Caco-2 (cell line): ENCODE measurements at regions of chr12 and their contacts with region 1.

Region 1: GRCh38 chr12:6335451-6336078 is 6.3 kb downstream of the TNFRSF1A start:
- DNase-seq: peak; percentile 64 to 66
- H3K4me3 ChIP-seq: peak overlapping the region; percentile 15; the same call in 1 of the 2 replicates
- H3K4me3 Mint-ChIP-seq: no peak overlapping the region
- H3K27ac Mint-ChIP-seq: no peak overlapping the region
- H3K4me1 ChIP-seq: peaks cover 48% of the 10 kb centered on the region
- H3K4me1 Mint-ChIP-seq: peaks cover 7% of the 10 kb centered on the region
- H3K27me3 ChIP-seq: no peaks in the 10 kb centered on the region
- H3K27me3 Mint-ChIP-seq: no peaks in the 10 kb centered on the region
- CTCF ChIP-seq: peak in 1 of 2 experiments; percentile 56

Region 2: DNA sequence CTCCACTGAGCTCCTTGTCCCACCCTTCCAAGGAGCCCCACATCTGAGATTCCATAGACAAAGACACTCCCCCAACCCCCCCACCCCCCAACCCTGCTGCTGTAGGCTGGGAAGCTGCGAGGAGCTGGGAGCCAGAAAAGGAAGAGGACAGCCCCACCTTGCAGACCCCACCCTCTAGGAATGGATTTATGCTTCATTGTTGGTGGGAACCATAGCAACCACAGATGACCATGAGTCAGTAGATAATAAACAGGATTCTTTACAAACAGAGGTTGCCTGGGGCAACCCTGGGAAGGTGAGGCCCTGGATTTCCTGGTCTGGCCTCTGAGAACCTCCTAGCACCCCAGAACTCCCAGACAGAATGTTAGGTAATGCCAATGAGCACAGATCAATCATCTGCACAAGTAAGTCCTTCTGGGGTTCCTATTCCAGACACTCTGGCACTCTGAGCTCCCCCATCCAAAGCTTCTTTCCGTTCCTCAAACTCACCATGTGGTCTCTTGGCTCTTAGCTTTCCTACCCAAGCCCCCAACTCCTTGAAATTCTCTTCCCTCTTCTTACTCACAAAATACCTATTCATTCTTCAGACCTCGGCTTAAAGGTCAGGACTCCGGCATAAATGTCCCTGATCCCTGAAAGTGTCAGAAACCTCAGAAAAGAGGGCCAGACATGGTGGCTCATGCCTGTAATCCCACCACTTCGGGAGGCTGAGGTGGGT is 40.3 kb before region 1 on chr12:
- CTCF ChIA-PET with region 1: interaction called, 12 read pairs
- POLR2A ChIA-PET with region 1: interaction called, 13 read pairs
- intact Hi-C with region 1: no loop called
- DNase-seq: peak; percentile 86 to 89
- H3K4me3 ChIP-seq: no peak overlapping the region
- H3K4me3 Mint-ChIP-seq: no peak overlapping the region
- H3K27ac Mint-ChIP-seq: peak overlapping the region; percentile 91
- H3K4me1 ChIP-seq: peaks cover 48% of the 10 kb centered on the region
- H3K4me1 Mint-ChIP-seq: peaks cover 34% of the 10 kb centered on the region
- H3K27me3 ChIP-seq: no peaks in the 10 kb centered on the region
- H3K27me3 Mint-ChIP-seq: no peaks in the 10 kb centered on the region
- CTCF ChIP-seq: no peak

Region 3: DNA sequence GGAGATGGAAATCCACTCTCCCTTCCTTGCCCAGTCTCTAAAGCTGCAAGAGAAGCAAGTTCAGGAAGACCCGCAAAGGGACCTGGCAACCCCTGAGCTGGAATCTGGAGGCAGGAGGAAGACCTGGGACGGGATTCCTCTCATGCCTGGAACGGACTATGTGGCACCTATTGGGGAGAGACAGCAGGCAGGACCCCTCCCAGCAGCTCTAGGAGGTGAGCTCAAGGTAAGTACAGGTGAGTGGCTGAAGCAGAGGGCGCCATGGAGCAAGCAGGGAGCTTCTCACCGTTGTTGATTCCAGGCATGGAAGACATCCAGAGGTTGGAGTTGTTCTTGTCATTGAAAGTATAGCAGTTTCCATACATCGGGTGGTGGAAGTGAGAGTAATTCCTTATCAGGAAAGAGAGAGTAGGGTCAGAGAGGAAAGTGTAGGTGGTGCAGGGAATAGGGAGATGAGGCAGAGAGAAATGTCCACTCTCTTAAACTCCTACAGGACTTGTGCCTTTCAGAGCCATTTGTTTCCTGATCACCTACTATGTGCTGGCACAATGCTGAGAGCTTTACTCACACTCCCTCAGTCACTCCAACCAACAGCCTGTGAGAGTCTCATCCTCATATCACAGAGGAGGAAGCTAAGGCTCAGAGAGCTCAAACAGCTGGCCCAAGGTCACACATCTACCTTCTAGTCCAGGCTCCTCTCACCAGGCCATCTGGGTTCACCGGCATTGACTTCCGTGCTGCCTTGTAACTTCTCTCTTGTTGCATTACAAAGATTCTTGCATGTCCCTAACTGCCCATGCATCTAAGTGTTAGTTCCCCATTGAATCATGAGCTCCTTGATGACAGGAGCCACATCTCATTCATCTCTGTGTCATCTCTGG is 20.2 kb after region 1 on chr12:
- CTCF ChIA-PET with region 1: interaction called, 14 read pairs
- POLR2A ChIA-PET with region 1: interaction called, 14 read pairs
- intact Hi-C with region 1: no loop called
- DNase-seq: peak; percentile 62 to 74
- H3K4me3 ChIP-seq: no peak overlapping the region
- H3K4me3 Mint-ChIP-seq: no peak overlapping the region
- H3K27ac Mint-ChIP-seq: no peak overlapping the region
- H3K4me1 ChIP-seq: peaks cover 10% of the 10 kb centered on the region
- H3K4me1 Mint-ChIP-seq: peaks cover 8% of the 10 kb centered on the region
- H3K27me3 ChIP-seq: no peaks in the 10 kb centered on the region
- H3K27me3 Mint-ChIP-seq: no peaks in the 10 kb centered on the region
- CTCF ChIP-seq: peak; percentile 24 to 48

Region 4: DNA sequence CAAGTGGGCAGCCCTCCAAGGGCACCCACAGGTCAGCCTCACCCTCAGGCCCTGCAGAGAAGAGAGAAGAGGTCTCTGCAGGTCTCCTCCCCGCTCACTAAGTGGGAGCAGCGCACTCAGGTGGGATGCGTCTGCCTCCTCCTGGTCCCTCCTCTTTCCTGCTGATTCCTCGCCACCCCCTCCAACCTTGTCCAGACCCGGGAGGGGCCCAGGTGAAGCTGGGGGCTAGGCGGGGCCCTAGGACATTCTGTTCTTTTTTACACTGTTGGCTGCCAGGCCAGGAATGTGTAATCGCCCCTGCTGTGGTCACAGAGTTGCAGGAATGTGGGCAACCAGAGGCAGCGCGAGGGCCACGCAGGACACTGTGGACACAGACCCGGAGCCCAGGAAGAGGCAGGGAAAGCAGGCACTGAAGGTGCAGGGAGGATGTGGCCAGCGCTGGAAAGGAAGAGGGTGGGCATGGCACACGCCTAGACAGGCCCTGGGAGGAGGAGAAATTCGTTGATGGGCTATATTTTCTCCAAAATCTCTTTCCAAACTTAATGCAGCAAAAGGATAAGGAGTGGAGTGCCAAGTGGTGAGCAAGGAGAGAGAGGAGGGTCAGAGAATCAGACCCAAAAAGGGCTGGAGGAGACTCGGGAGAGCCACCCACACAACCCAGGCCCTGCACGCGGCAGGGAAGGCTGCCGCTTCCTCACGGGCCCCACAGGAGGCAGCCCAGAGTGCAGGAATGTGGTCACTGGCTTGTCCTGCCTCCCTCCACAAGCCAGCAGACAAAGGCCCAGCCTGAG is 40.7 kb after region 1 on chr12:
- CTCF ChIA-PET with region 1: interaction called, 32 read pairs
- POLR2A ChIA-PET with region 1: interaction called, 27 read pairs
- intact Hi-C with region 1: loop called (anchors 1 kb)
- DNase-seq: peak; percentile 88 to 89
- H3K4me3 ChIP-seq: no peak overlapping the region
- H3K4me3 Mint-ChIP-seq: peak overlapping the region; percentile 72
- H3K27ac Mint-ChIP-seq: peak overlapping the region; percentile 94
- H3K4me1 ChIP-seq: peaks cover 68% of the 10 kb centered on the region
- H3K4me1 Mint-ChIP-seq: peaks cover 51% of the 10 kb centered on the region
- H3K27me3 ChIP-seq: no peaks in the 10 kb centered on the region
- H3K27me3 Mint-ChIP-seq: no peaks in the 10 kb centered on the region
- CTCF ChIP-seq: peak; percentile 69 to 71

Region 5: DNA sequence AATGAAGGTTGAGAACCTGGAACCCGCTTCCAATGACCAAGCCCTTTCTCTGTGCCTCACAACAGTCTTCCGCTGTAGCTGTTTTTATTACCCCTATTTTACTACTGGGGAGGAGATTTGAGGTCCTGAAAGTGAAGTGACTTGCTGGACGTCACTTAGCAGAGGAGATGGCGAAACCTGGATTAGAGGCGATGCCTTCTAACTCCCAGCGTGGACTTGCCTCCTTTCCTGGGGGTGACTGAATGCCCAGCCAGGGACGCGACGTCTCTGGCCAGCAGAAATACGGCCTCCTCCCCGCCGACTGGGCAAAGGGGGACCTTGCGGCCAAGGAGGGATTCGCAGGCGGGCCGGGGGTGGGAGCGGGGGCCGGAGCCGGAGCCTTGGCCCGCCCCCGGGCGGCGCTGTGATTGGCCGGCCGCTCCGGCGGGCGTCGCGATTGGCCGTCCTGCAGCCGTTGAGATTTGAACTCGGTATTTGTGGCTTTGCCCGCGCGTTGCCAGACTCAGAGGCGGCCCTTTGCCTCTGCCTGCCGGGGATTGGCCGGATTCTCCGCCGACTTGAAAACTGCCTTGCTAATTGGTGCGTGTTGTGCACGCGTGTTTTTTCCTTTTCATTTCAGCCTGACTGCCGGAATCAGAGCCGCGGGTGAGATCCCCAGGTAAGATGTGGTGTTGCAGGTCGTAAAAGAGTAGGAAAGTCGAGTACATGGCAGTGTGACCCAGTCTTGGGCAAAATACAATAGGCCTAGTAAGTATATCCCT is 158.1 kb after region 1 on chr12 and contains the start of gene NCAPD2:
- CTCF ChIA-PET with region 1: no interaction called
- POLR2A ChIA-PET with region 1: interaction called, 17 read pairs
- intact Hi-C with region 1: no loop called
- DNase-seq: peak; percentile 98 to 99
- H3K4me3 ChIP-seq: peak within 1 kb of the TSS; percentile 81
- H3K4me3 Mint-ChIP-seq: peak within 1 kb of the TSS; percentile 92
- H3K27ac Mint-ChIP-seq: peak within 1 kb of the TSS; percentile 96
- H3K4me1 ChIP-seq: peaks cover 12% of the 10 kb centered on the region
- H3K4me1 Mint-ChIP-seq: peaks cover 10% of the 10 kb centered on the region
- H3K27me3 ChIP-seq: no peaks in the 10 kb centered on the region
- H3K27me3 Mint-ChIP-seq: no peaks in the 10 kb centered on the region
- CTCF ChIP-seq: peak in 1 of 2 experiments; percentile 17
- total RNA-seq, gene NCAPD2: 204 and 218 TPM in 2 replicates

Region 6: GRCh38 chr12:6540181-6540877 is 204.8 kb after region 1 on chr12:
- CTCF ChIA-PET with region 1: no interaction called
- POLR2A ChIA-PET with region 1: no interaction called
- intact Hi-C with region 1: no loop called
- DNase-seq: peak; percentile 66 to 81
- H3K4me3 ChIP-seq: no peak overlapping the region
- H3K4me3 Mint-ChIP-seq: peak overlapping the region; percentile 71
- H3K27ac Mint-ChIP-seq: peak overlapping the region; percentile 97
- H3K4me1 ChIP-seq: peaks cover 31% of the 10 kb centered on the region
- H3K4me1 Mint-ChIP-seq: peaks cover 42% of the 10 kb centered on the region
- H3K27me3 ChIP-seq: no peaks in the 10 kb centered on the region
- H3K27me3 Mint-ChIP-seq: no peaks in the 10 kb centered on the region
- CTCF ChIP-seq: no peak